ENCODE measurements at regions of chr12 and their contacts with region 1.

Region 1: DNA sequence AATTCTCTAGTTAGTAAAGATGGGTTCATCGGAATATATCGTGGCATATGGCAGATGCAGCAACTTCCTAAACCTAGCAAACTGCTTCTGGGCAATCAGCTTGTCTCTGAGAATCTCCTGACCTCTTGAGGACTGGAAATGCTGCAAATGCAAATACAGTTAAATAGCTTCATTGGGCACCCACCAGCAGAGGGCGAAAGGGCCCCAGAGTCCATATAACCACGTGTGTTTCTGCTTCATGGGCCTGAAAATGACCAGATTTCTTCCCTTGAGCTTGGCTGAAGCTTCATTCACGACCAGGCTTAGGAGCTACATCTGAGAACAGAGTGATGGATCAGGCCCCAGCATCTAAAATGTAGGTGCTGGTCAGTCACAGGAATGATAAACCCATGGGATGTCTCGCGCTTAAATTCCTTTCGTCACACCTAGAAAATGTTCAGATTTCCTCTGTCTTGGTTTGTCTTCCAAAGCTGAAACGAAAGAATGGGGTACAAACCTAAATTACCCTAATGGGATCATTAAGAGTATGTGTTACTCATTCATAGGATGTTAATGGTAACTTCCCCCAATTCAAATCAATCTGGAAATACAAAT is 1482.5 kb upstream of the TMEM132C start:
- DNase-seq: peak; percentile 66
- ATAC-seq: peak; percentile 91
- H3K4me3 ChIP-seq: no peak overlapping the region
- H3K27ac ChIP-seq: no peak overlapping the region
- H3K4me1 ChIP-seq: no peaks in the 10 kb centered on the region
- H3K27me3 ChIP-seq: peaks cover 34% of the 10 kb centered on the region
- CTCF ChIP-seq: peak; percentile 77 to 87 (median 79)
- POLR2A ChIP-seq: no peak
- RAD21 ChIP-seq: peak; percentile 75

Region 2: GRCh38 chr12:126747530-126748149 is 36.8 kb before region 1 on chr12:
- CTCF ChIA-PET with region 1: interaction called, 16 read pairs
- POLR2A ChIA-PET with region 1: no interaction called
- RAD21 ChIA-PET with region 1: no interaction called
- intact Hi-C with region 1: no loop called
- DNase-seq: peak; percentile 16
- ATAC-seq: peak; percentile 99
- H3K4me3 ChIP-seq: no peak overlapping the region
- H3K27ac ChIP-seq: no peak overlapping the region
- H3K4me1 ChIP-seq: no peaks in the 10 kb centered on the region
- H3K27me3 ChIP-seq: no peaks in the 10 kb centered on the region
- CTCF ChIP-seq: peak; percentile 28 to 98 (median 94); a peak in 4 of 6 replicates
- POLR2A ChIP-seq: no peak
- RAD21 ChIP-seq: peak; percentile 54

Region 3: GRCh38 chr12:126874427-126875026 is 90.1 kb after region 1 on chr12:
- CTCF ChIA-PET with region 1: interaction called, 39 read pairs
- POLR2A ChIA-PET with region 1: no interaction called
- RAD21 ChIA-PET with region 1: interaction called, 4 read pairs
- intact Hi-C with region 1: loop called (anchors 1 kb)
- DNase-seq: peak; percentile 50
- ATAC-seq: peak; percentile 99
- H3K4me3 ChIP-seq: no peak overlapping the region
- H3K27ac ChIP-seq: no peak overlapping the region
- H3K4me1 ChIP-seq: no peaks in the 10 kb centered on the region
- H3K27me3 ChIP-seq: 0 out of 2 replicates have a peak, but pooled peaks cover under 1% of the 10 kb centered on the region
- CTCF ChIP-seq: peak; percentile 69 to 99 (median 93); a peak in 5 of 6 replicates
- POLR2A ChIP-seq: no peak
- RAD21 ChIP-seq: peak; percentile 86

Region 4: GRCh38 chr12:127165567-127166392 is 381.4 kb after region 1 on chr12:
- CTCF ChIA-PET with region 1: no interaction called
- POLR2A ChIA-PET with region 1: no interaction called
- RAD21 ChIA-PET with region 1: no interaction called
- intact Hi-C with region 1: no loop called
- DNase-seq: peak; percentile 52
- ATAC-seq: peak; percentile 98
- H3K4me3 ChIP-seq: peak overlapping the region; percentile 34 to 54
- H3K27ac ChIP-seq: peak overlapping the region; percentile 49; the same call in 1 of the 2 replicates
- H3K4me1 ChIP-seq: peaks cover 2 to 21% of the 10 kb centered on the region in 2 experiments; a peak in 3 of 4 replicates
- H3K27me3 ChIP-seq: no peaks in the 10 kb centered on the region
- CTCF ChIP-seq: no peak
- POLR2A ChIP-seq: no peak
- RAD21 ChIP-seq: no peak

Region 5: GRCh38 chr12:127293507-127294310 is 509.3 kb after region 1 on chr12:
- CTCF ChIA-PET with region 1: interaction called, 16 read pairs
- POLR2A ChIA-PET with region 1: no interaction called
- RAD21 ChIA-PET with region 1: no interaction called
- intact Hi-C with region 1: loop called (anchors 1 kb)
- DNase-seq: peak; percentile 50
- ATAC-seq: peak; percentile 98
- H3K4me3 ChIP-seq: no peak overlapping the region
- H3K27ac ChIP-seq: no peak overlapping the region
- H3K4me1 ChIP-seq: no peaks in the 10 kb centered on the region
- H3K27me3 ChIP-seq: no peaks in the 10 kb centered on the region
- CTCF ChIP-seq: peak; percentile 81 to 95 (median 95)
- POLR2A ChIP-seq: no peak
- RAD21 ChIP-seq: peak; percentile 92

Region 6: DNA sequence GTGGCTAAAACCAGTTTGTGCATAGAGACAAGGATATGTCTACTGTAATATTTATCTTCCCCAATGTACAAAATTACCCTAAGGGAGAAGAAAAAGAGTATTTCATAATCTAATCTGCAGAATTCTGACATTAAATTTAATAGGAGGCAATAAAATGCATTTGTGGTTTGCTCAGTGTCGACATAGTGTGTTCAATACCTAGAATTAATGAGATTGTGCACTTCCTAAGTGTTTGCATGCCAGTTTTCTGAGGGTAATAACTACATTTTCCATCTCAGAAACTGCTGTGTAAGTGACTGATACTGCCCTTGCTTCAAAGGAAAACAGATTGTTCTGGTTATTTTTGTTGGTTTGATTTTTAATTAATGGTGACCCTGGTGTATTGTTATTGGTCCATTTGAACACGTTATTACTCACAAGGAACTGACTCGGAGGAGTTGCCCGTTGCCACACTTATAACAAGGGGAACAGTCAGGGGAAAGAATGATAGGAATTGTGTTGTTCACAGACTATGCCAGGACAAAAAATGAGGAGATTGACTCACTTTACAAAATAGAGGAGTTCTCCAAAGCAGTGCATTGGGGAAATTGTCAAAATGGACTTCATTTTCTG is 522.3 kb after region 1 on chr12:
- CTCF ChIA-PET with region 1: no interaction called
- POLR2A ChIA-PET with region 1: no interaction called
- RAD21 ChIA-PET with region 1: no interaction called
- intact Hi-C with region 1: no loop called
- DNase-seq: no peak
- ATAC-seq: no peak
- H3K4me3 ChIP-seq: no peak overlapping the region
- H3K27ac ChIP-seq: no peak overlapping the region
- H3K4me1 ChIP-seq: no peaks in the 10 kb centered on the region
- H3K27me3 ChIP-seq: no peaks in the 10 kb centered on the region
- CTCF ChIP-seq: no peak
- POLR2A ChIP-seq: no peak
- RAD21 ChIP-seq: no peak

Region 7: DNA sequence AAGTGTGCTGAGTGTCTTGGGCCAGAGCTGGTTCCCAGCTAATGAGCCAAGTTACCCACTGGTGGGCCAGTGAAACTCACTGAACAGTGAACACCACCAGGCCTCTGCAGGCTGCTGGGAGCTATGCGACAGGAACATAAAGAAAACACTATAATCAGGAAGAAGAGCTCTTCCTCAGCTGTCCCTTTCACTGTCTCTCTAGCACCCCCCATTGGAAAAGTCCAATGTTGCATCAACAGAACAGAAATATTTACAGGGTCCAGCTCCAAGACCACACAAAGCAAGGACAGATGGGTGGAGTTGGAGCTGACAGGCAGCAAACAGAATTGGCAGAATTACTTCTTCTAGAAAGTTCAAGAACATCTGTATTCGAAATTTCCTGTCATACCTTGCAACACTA is 579.0 kb after region 1 on chr12:
- CTCF ChIA-PET with region 1: interaction called, 27 read pairs
- POLR2A ChIA-PET with region 1: no interaction called
- RAD21 ChIA-PET with region 1: no interaction called
- intact Hi-C with region 1: no loop called
- DNase-seq: peak; percentile 22
- ATAC-seq: peak; percentile 75
- H3K4me3 ChIP-seq: no peak overlapping the region
- H3K27ac ChIP-seq: no peak overlapping the region
- H3K4me1 ChIP-seq: no peaks in the 10 kb centered on the region
- H3K27me3 ChIP-seq: no peaks in the 10 kb centered on the region
- CTCF ChIP-seq: peak; percentile 23 to 60 (median 54); a peak in 5 of 6 replicates
- POLR2A ChIP-seq: no peak
- RAD21 ChIP-seq: peak; percentile 63

Measured in HCT116 (cell line).